ENCODE measurements at regions of chr2 and their contacts with region 1.

Region 1: DNA sequence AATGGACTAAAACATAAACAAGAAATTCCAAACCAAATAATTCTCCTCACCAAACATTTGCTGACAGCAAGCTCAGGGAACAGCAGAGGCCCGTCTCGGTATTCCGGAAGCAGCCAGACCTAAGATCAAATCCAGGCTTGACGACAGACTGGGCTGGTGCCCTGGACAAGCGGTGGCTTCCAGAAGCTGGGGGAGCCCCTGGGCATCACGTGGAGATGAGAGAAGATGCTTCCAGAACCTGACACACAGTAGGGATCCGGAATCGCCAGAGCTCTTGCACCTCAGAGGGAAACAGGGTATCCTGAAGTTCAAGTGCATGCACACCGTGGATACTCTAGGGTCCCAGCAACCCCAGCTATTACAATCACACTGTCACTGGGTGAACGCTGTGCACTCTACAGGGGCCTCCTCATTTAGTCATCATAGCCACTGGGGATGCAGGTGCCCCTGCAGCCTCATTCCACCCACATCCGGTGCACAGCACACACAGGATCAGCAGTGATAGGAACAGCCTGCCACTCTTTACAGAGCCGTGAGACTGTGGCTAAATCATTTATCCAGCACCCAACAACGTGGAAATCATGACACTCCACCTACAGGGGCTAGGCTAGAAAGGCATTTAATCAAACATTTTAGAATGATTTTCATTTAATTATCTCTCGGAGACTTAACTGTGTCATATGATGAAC is 102.6 kb downstream of the HDAC4 start:
- DNase-seq: peak in 13 of 14 experiments; percentile 61 to 90 (median 75)
- ATAC-seq: peak; percentile 86
- H3K4me3 ChIP-seq: peak overlapping the region; percentile 58
- H3K4me3 Mint-ChIP-seq: peak overlapping the region; percentile 93
- H3K27ac ChIP-seq: peak overlapping the region; percentile 55 to 66
- H3K27ac Mint-ChIP-seq: peak overlapping the region; percentile 93
- H3K4me1 ChIP-seq: peaks cover 78% of the 10 kb centered on the region
- H3K4me1 Mint-ChIP-seq: peaks cover 82% of the 10 kb centered on the region
- H3K27me3 ChIP-seq: no peaks in the 10 kb centered on the region
- H3K27me3 Mint-ChIP-seq: no peaks in the 10 kb centered on the region
- CTCF ChIP-seq: peak; percentile 17

Region 2: DNA sequence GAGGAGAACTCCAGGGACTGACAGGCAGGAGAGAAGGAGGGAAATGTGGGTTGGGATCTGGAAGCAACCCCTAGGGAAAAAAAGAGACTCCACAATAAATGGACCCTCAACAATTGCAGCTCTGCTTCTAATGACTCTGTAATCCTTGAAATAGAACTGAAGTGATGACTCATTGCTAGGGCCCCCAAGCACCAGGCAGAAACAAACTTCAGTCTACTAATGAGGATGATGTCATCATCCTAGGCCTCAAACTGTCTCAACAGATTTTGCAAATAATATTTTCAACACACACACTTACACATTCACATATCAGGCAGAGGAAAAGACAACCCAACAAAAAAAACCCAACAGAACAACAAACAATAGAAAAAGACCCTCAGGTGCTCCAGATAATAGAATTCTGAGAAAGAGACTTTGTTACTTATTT is 40.7 kb before region 1 on chr2:
- CTCF ChIA-PET with region 1: no interaction called
- POLR2A ChIA-PET with region 1: interaction called, 3 read pairs
- intact Hi-C with region 1: loop called in 1 of 2 experiments (anchors 5 kb)
- DNase-seq: peak in 3 of 14 experiments; percentile 47 to 59 (median 48)
- ATAC-seq: peak; percentile 35
- H3K4me3 ChIP-seq: no peak overlapping the region
- H3K4me3 Mint-ChIP-seq: peak overlapping the region; percentile 62
- H3K27ac ChIP-seq: no peak overlapping the region
- H3K27ac Mint-ChIP-seq: peak overlapping the region; percentile 85
- H3K4me1 ChIP-seq: peaks cover 61% of the 10 kb centered on the region
- H3K4me1 Mint-ChIP-seq: peaks cover 94% of the 10 kb centered on the region
- H3K27me3 ChIP-seq: no peaks in the 10 kb centered on the region
- H3K27me3 Mint-ChIP-seq: no peaks in the 10 kb centered on the region
- CTCF ChIP-seq: no peak

Region 3: DNA sequence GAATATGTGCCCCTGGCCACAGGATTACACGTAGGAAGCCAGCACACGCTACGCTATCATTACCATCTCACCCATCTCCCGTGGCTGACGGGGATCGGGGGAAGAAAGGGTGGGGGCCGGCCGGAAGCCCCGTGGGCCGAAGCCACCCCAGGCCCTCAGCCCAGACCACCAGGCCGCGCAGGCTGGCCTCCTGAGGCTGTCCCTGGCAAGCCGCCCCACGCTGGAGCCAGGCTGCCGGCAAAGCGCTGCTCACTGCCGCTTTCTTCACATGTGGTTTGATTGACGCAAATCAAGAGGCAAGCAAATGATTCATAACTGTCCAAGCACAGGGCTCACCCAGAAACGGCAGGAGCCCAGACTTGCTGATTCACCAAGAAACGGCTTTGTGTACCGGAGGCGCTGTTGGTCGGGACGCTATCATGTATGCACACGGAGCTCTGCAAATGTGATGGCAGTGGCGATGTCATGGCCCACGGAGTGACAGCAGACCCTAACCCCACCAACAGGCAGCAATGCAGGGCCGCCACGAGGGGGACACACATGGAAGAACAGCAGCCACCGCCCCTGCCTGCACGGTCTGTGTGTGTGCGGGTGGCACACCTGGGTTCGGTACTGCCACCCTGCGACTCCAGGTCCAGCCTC is 23.1 kb before region 1 on chr2:
- CTCF ChIA-PET with region 1: interaction called, 26 read pairs
- POLR2A ChIA-PET with region 1: interaction called, 30 read pairs
- intact Hi-C with region 1: loop called (anchors 1 to 2 kb)
- DNase-seq: peak; percentile 70 to 95 (median 80)
- ATAC-seq: peak; percentile 88
- H3K4me3 ChIP-seq: peak overlapping the region; percentile 47
- H3K4me3 Mint-ChIP-seq: peak overlapping the region; percentile 79
- H3K27ac ChIP-seq: peak overlapping the region; percentile 19 to 55
- H3K27ac Mint-ChIP-seq: peak overlapping the region; percentile 93
- H3K4me1 ChIP-seq: peaks cover 46% of the 10 kb centered on the region
- H3K4me1 Mint-ChIP-seq: peaks cover 64% of the 10 kb centered on the region
- H3K27me3 ChIP-seq: no peaks in the 10 kb centered on the region
- H3K27me3 Mint-ChIP-seq: no peaks in the 10 kb centered on the region
- CTCF ChIP-seq: no peak

Region 4: DNA sequence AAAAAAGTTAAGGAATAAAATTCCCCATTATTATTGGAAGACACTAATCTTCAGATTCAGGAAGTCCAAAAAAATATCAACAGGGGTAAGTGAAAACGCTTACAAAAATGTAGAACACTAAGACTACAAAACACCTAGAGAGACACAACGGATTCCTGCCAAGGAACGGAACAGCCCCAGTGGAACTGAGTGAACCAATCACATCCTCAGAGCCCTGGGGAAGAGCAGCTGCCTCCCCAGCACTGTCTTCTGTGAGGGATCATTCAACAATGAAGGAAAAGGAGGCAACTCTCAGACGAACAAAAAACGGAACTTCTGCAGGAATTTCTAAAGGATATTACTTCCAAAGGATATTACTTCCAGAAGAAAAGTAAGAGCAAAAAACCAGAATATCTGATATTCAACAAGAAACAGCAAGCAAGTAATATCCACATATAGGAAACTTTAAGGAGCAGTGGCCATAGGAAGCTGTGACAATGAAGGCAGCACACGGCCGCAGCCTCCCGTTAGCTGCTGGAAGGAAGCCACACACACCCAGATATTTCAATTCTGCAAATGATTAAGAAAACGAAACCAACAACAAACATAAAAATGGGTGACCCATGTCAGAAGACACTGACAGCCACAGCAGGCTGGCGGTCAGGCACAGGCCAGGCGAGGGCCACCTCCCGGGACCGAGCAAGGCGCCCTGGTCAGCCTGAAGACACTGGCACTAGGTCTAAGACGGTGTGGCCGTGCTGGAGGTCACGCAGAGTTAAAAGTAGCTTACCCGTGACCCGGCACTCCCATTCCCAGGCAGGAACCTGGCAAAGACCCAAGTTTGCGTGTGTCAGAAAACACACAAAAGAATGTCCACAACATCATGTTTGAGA is 20.8 kb after region 1 on chr2:
- CTCF ChIA-PET with region 1: interaction called, 13 read pairs
- POLR2A ChIA-PET with region 1: interaction called, 14 read pairs
- intact Hi-C with region 1: no loop called
- DNase-seq: peak in 5 of 14 experiments; percentile 32 to 61 (median 57)
- ATAC-seq: no peak
- H3K4me3 ChIP-seq: peak overlapping the region; percentile 49
- H3K4me3 Mint-ChIP-seq: peak overlapping the region; percentile 90
- H3K27ac ChIP-seq: peak overlapping the region; percentile 37 to 61
- H3K27ac Mint-ChIP-seq: peak overlapping the region; percentile 97
- H3K4me1 ChIP-seq: peaks cover 69% of the 10 kb centered on the region
- H3K4me1 Mint-ChIP-seq: peaks cover 70% of the 10 kb centered on the region
- H3K27me3 ChIP-seq: no peaks in the 10 kb centered on the region
- H3K27me3 Mint-ChIP-seq: no peaks in the 10 kb centered on the region
- CTCF ChIP-seq: no peak

Region 5: GRCh38 chr2:239326831-239327535 is 28.7 kb after region 1 on chr2:
- CTCF ChIA-PET with region 1: interaction called, 13 read pairs
- POLR2A ChIA-PET with region 1: interaction called, 14 read pairs
- intact Hi-C with region 1: loop called (anchors 1 to 5 kb)
- DNase-seq: peak; percentile 46 to 89 (median 74)
- ATAC-seq: peak; percentile 77
- H3K4me3 ChIP-seq: no peak overlapping the region
- H3K4me3 Mint-ChIP-seq: peak overlapping the region; percentile 75
- H3K27ac ChIP-seq: peak overlapping the region; percentile 71 to 73
- H3K27ac Mint-ChIP-seq: peak overlapping the region; percentile 93
- H3K4me1 ChIP-seq: peaks cover 78% of the 10 kb centered on the region
- H3K4me1 Mint-ChIP-seq: peaks cover 85% of the 10 kb centered on the region
- H3K27me3 ChIP-seq: no peaks in the 10 kb centered on the region
- H3K27me3 Mint-ChIP-seq: no peaks in the 10 kb centered on the region
- CTCF ChIP-seq: no peak

Region 6: GRCh38 chr2:239380831-239381708 is 82.8 kb after region 1 on chr2:
- CTCF ChIA-PET with region 1: interaction called, 8 read pairs
- POLR2A ChIA-PET with region 1: interaction called, 13 read pairs
- intact Hi-C with region 1: no loop called
- DNase-seq: peak; percentile 56 to 89 (median 70)
- ATAC-seq: peak; percentile 93
- H3K4me3 ChIP-seq: peak overlapping the region; percentile 51
- H3K4me3 Mint-ChIP-seq: peak overlapping the region; percentile 86
- H3K27ac ChIP-seq: peak overlapping the region; percentile 61 to 65
- H3K27ac Mint-ChIP-seq: peak overlapping the region; percentile 92
- H3K4me1 ChIP-seq: peaks cover 17% of the 10 kb centered on the region
- H3K4me1 Mint-ChIP-seq: peaks cover 23% of the 10 kb centered on the region
- H3K27me3 ChIP-seq: no peaks in the 10 kb centered on the region
- H3K27me3 Mint-ChIP-seq: no peaks in the 10 kb centered on the region
- CTCF ChIP-seq: no peak